ENCODE measurements at regions of chr17 and their contacts with region 1.

Region 1: GRCh38 chr17:4939796-4940624 is at the starts of genes RNF167 and SLC25A11:
- DNase-seq: peak; percentile 98
- ATAC-seq: peak; percentile 83
- H3K4me3 Mint-ChIP-seq: peak within 1 kb of the TSS; percentile 99
- H3K27ac Mint-ChIP-seq: peak within 1 kb of the TSS; percentile 97
- H3K4me1 Mint-ChIP-seq: peaks cover 54% of the 10 kb centered on the region
- H3K27me3 Mint-ChIP-seq: no peaks in the 10 kb centered on the region
- total RNA-seq, gene RNF167: 147 to 189 TPM
- total RNA-seq, gene SLC25A11: 74.2 to 77.9 TPM

Region 2: GRCh38 chr17:3723556-3724369 is 1216.2 kb before region 1 on chr17 and contains the start of gene HASPIN:
- CTCF ChIA-PET with region 1: no interaction called
- POLR2A ChIA-PET with region 1: no interaction called
- intact Hi-C with region 1: loop called in 1 of 2 experiments (anchors 5 kb)
- DNase-seq: peak; percentile 96
- ATAC-seq: peak; percentile 86
- H3K4me3 Mint-ChIP-seq: peak within 1 kb of the TSS; percentile 83
- H3K27ac Mint-ChIP-seq: peak within 1 kb of the TSS; percentile 93
- H3K4me1 Mint-ChIP-seq: peaks cover 58% of the 10 kb centered on the region
- H3K27me3 Mint-ChIP-seq: no peaks in the 10 kb centered on the region
- total RNA-seq, gene HASPIN: 21.0 to 25.2 TPM

Region 3: GRCh38 chr17:4366327-4367063 is 573.5 kb before region 1 on chr17 and contains the start of gene UBE2G1:
- CTCF ChIA-PET with region 1: no interaction called
- POLR2A ChIA-PET with region 1: no interaction called
- intact Hi-C with region 1: loop called in 1 of 2 experiments (anchors 1 kb)
- DNase-seq: peak; percentile 99
- ATAC-seq: peak; percentile 86
- H3K4me3 Mint-ChIP-seq: peak within 1 kb of the TSS; percentile 65
- H3K27ac Mint-ChIP-seq: peak within 1 kb of the TSS; percentile 90
- H3K4me1 Mint-ChIP-seq: peaks cover 29% of the 10 kb centered on the region
- H3K27me3 Mint-ChIP-seq: no peaks in the 10 kb centered on the region
- total RNA-seq, gene UBE2G1: 51.0 to 52.9 TPM

Region 4: GRCh38 chr17:4733073-4733531 is 206.9 kb before region 1 on chr17:
- CTCF ChIA-PET with region 1: no interaction called
- POLR2A ChIA-PET with region 1: no interaction called
- intact Hi-C with region 1: loop called in 1 of 2 experiments (anchors 1 kb)
- DNase-seq: no peak
- ATAC-seq: no peak
- H3K4me3 Mint-ChIP-seq: no peak overlapping the region
- H3K27ac Mint-ChIP-seq: peak overlapping the region; percentile 17
- H3K4me1 Mint-ChIP-seq: peaks cover 39% of the 10 kb centered on the region
- H3K27me3 Mint-ChIP-seq: peaks cover under 1% of the 10 kb centered on the region

Region 5: DNA sequence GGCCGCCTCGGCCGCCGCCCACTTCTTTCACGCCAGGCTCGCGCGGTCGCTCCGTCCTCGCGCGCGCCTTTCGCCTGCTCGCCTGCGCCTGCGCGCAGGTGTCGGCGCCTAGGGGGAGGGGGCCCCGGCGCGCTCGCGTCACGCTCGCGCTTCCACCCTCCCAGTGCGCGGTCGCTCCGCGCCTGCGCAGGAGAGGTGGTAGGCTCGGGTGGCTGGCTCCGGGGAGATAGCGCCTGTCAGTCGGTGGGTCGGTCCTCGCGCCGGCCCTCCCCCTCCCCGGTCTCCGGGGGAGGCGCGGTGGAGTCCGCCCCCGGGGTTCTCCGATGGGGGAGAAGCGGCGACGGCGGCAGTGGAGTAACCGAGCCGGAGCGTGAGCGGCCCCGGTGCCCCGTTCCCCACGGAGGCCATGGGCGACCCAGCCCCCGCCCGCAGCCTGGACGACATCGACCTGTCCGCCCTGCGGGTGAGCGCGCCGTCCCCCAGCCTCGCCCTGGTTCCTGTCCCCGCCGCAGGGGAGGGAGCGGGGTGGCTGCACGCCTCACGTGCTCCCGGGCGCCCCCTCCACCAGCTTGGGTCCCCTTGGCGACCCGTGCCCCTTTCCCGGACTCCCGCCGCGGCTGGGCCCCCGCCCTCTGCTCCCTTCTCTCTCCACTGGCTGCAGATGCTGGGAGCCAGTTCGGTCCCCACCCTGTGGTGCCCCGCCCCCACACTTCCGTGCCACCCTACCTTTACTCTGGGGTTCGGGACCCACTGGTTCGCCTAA is 106.7 kb before region 1 on chr17 and contains the start of gene MINK1:
- CTCF ChIA-PET with region 1: no interaction called
- POLR2A ChIA-PET with region 1: no interaction called
- intact Hi-C with region 1: loop called in 1 of 2 experiments (anchors 1 kb)
- DNase-seq: peak; percentile 92
- ATAC-seq: peak; percentile 93
- H3K4me3 Mint-ChIP-seq: peak within 1 kb of the TSS; percentile 90
- H3K27ac Mint-ChIP-seq: peak within 1 kb of the TSS; percentile 91
- H3K4me1 Mint-ChIP-seq: peaks cover 28% of the 10 kb centered on the region
- H3K27me3 Mint-ChIP-seq: no peaks in the 10 kb centered on the region
- total RNA-seq, gene MINK1: 48.2 to 57.7 TPM

Region 6: DNA sequence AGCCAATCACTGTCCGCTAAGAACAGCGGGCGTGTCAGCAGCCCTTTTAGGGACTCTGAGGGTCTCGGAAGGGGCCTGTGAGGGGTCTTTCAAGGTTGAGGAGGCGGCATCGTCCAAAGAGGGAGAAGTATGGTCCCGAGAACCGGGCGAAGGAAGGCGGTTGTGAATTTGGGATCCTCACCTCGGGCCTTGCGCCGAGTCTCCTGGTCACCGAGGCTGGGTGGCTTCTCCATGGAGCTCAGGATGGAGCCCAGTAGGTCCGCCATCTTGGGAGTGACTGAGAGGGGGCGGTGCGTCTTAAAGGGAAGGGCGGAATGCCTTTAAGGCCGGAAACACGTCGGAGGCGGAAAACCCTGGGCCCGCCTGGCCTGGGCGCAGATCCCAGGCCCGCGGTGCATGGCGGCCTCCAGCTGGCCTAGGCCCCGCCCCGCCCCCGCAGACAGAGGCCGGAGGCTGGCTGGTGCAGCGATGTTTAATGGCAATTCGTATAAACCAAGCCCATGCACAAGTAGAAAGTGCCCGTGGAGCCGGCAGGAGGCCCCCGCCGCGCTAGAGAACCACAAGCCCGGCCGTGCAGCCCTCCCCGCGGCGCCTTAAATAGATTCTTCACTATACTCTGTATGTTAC is 27.6 kb after region 1 on chr17 and contains the start of gene SPAG7:
- CTCF ChIA-PET with region 1: interaction called, 13 read pairs
- POLR2A ChIA-PET with region 1: interaction called, 80 read pairs
- intact Hi-C with region 1: loop called (anchors 1 kb)
- DNase-seq: peak; percentile 96
- ATAC-seq: peak; percentile 54
- H3K4me3 Mint-ChIP-seq: no peak within 1 kb of the TSS
- H3K27ac Mint-ChIP-seq: no peak within 1 kb of the TSS
- H3K4me1 Mint-ChIP-seq: peaks cover 40% of the 10 kb centered on the region
- H3K27me3 Mint-ChIP-seq: no peaks in the 10 kb centered on the region
- total RNA-seq, gene SPAG7: 61.4 to 69.4 TPM

Region 7: DNA sequence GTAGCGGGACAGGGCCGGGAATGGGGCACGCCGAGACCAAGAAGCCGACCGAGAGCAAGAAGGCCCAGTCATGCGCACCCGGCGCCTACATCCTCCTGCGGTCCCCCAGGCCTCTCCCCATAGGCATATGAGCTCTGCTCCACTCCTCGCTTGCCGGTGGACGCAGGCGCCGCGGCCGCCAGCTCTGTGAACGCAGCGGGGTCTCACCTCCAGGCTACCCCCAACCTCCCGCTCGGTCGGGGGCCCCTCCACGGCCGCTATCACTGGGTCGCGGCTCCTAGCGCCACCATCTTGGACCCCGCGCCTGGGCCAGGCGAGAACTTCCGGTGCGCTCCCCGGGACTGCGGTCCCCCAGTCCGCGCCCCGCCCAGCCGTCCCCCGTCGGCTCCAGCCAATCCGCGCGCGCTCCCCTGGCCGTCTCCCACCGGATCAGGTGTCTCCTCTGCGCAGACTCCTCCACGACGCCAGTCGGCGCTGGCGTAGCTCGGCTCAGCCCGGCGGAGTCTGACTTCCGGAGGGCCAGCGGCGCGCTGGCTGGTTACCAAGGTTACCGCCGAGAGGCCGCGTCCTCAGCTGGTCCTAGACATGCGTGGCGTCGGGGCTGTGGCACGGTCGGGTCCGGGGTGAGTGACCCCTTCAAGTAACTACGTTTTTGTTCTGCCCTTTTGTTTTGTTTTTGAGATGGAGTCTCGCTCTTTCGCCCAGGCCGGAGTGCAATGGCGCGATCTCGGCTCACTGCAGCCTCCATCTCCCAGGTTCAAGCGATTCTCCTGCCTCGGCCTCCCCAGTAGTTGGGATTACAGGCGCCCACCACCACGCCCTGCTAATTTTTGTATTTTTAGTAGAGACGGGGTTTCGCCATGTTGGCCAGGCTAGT is 251.8 kb after region 1 on chr17 and contains the start of gene ZNF594:
- CTCF ChIA-PET with region 1: no interaction called
- POLR2A ChIA-PET with region 1: no interaction called
- intact Hi-C with region 1: loop called in 1 of 2 experiments (anchors 10 kb)
- DNase-seq: peak; percentile 99
- ATAC-seq: peak; percentile 100
- H3K4me3 Mint-ChIP-seq: peak within 1 kb of the TSS; percentile 94
- H3K27ac Mint-ChIP-seq: peak within 1 kb of the TSS; percentile 88
- H3K4me1 Mint-ChIP-seq: peaks cover 27% of the 10 kb centered on the region
- H3K27me3 Mint-ChIP-seq: no peaks in the 10 kb centered on the region
- total RNA-seq, gene ZNF594: 8.0 to 8.4 TPM

Region 8: GRCh38 chr17:5769593-5770354 is 829.8 kb after region 1 on chr17:
- CTCF ChIA-PET with region 1: no interaction called
- POLR2A ChIA-PET with region 1: no interaction called
- intact Hi-C with region 1: no loop called
- DNase-seq: no peak
- ATAC-seq: no peak
- H3K4me3 Mint-ChIP-seq: no peak overlapping the region
- H3K27ac Mint-ChIP-seq: no peak overlapping the region
- H3K4me1 Mint-ChIP-seq: no peaks in the 10 kb centered on the region
- H3K27me3 Mint-ChIP-seq: peaks cover 27% of the 10 kb centered on the region